Dendritic cell treated with granulocyte-macrophage colony-stimulating factor and Interleukin-4, amounts not matched to agents 40 ng/mL and 50 ng/mL, for 4 days (primary cell): ENCODE measurements at regions of chr10 and their contacts with region 1.

Region 1: DNA sequence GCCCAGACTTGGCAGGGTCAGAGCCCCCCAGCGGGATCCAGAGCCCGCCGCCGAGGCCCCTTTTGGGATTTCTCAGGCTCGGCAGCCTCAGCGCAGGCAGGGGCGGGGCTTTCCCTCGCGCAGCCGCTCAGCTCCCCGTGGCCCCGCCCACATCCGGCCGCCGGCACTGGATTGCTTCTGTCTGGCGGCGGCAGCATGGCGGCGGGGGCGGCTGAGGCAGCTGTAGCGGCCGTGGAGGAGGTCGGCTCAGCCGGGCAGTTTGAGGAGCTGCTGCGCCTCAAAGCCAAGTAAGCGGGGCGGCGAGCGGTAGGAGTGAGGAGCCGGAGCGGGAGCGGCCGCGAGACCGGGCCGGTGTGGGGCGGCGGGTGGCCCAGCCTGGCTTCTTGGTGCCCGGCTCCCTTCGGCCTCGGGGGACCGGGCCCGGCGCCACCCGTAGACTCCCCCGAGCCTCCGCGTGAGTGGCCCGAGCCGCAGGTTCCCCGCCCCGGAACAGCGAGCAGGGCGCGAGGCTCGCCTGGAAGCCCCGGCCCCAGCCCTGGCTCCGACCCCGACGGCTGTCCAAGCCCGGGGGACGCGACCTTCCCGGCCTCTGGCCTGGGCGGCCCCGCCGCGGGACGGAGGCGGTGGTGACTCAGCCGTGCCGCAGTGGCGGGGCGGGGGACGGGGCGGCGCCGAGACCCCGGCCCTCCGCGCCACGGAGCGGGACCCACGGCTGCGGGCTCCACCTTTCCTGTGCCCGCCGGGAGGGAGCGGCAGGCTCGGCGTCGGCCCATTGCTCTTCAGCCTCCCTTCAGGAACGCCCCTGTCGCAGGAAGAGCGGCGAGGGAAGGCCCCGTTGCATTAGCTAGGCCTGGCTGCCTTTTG is at the start of gene GLRX3:
- H3K4me3 Mint-ChIP-seq: peak within 1 kb of the TSS; percentile 99
- H3K27ac Mint-ChIP-seq: peak within 1 kb of the TSS; percentile 89
- H3K4me1 Mint-ChIP-seq: peaks cover 38% of the 10 kb centered on the region
- H3K27me3 Mint-ChIP-seq: peaks cover 23% of the 10 kb centered on the region

Region 2: DNA sequence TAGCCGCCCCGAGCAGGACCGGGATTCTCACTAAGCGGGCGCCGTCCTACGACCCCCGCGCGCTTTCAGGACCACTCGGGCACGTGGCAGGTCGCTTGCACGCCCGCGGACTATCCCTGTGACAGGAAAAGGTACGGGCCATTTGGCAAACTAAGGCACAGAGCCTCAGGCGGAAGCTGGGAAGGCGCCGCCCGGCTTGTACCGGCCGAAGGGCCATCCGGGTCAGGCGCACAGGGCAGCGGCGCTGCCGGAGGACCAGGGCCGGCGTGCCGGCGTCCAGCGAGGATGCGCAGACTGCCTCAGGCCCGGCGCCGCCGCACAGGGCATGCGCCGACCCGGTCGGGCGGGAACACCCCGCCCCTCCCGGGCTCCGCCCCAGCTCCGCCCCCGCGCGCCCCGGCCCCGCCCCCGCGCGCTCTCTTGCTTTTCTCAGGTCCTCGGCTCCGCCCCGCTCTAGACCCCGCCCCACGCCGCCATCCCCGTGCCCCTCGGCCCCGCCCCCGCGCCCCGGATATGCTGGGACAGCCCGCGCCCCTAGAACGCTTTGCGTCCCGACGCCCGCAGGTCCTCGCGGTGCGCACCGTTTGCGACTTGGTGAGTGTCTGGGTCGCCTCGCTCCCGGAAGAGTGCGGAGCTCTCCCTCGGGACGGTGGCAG is 669.6 kb before region 1 on chr10 and contains the start of gene MGMT:
- intact Hi-C with region 1: loop called (anchors 10 kb)
- H3K4me3 Mint-ChIP-seq: peak within 1 kb of the TSS; percentile 82
- H3K27ac Mint-ChIP-seq: peak within 1 kb of the TSS; percentile 74
- H3K4me1 Mint-ChIP-seq: peaks cover 4% of the 10 kb centered on the region
- H3K27me3 Mint-ChIP-seq: peaks cover 11% of the 10 kb centered on the region

Region 3: GRCh38 chr10:130110246-130111112 is 26.0 kb before region 1 on chr10 and contains the start of gene C10orf143:
- intact Hi-C with region 1: loop called (anchors 1 kb)
- H3K4me3 Mint-ChIP-seq: peak within 1 kb of the TSS; percentile 86
- H3K27ac Mint-ChIP-seq: peak within 1 kb of the TSS; percentile 94
- H3K4me1 Mint-ChIP-seq: peaks cover 33% of the 10 kb centered on the region
- H3K27me3 Mint-ChIP-seq: no peaks in the 10 kb centered on the region

Region 4: DNA sequence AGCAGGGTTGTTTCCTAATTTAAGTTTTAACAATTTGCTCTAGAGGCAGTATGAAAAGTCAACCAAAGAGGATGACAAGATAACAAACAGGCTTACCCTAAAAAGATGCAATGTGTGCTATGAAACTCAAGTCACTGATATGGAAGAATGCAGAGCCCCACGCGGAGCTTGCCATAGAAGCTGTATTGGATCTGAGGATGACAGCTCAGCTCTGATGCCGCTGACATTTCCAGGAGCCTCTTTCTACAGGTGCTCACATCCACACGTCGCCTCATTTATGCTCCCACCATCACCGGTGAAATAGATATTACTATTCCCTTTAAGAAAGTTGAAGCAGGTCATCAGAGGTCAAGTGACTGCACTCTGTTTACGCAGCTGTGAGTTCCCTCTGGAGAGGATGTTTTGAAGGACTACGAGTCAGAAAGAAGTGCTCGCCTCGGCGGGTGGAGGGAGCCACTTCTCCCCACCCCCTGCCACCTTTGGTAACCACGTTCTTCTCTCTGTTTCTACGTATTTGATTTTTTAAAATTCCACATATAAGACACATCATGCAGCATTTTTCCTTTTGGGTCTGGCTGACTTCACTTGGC is 275.1 kb after region 1 on chr10:
- intact Hi-C with region 1: no loop called
- H3K4me3 Mint-ChIP-seq: no peak overlapping the region
- H3K27ac Mint-ChIP-seq: no peak overlapping the region
- H3K4me1 Mint-ChIP-seq: no peaks in the 10 kb centered on the region
- H3K27me3 Mint-ChIP-seq: peaks cover 2% of the 10 kb centered on the region